ENCODE measurements at regions of chr17 and their contacts with region 1.

Region 1: DNA sequence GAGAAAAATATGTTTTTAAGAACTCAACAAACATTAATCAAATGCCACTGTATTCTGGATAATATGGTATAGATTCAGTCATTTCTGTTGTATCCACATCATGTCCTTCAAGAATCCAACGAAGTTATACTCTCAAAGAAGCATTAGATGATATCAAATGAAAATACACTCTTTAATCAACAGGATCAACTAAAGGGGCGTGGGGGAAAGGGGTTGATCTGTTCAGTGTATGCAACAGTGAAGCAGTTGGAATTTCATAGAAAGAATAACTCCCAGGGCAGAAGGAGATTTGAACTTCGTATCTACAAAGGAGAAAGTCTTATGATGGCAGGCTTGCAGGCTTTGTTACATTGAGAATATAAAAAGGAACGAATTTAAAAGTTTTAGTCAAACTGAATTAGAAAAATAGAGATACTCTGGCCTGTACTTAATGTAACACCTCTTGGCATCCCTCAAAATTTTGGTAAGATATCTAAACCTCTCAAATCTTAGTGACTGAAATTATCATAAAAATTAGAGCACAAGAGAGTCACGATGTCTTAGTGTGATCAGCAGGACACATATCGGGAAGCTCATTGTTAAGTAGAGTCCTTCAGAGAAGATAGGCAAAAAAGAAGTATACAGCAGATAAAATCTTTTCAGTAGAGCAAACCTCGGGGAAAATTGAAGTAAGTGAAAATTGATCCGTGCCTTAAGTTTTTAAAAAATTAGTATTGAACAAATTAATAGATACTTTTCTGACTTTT is 431.4 kb downstream of the KCNJ18 start:
- DNase-seq: no peak
- ATAC-seq: peak in 1 of 3 donors; percentile 14
- H3K4me3 ChIP-seq: no peak overlapping the region
- H3K4me3 Mint-ChIP-seq: no peak overlapping the region
- H3K27ac ChIP-seq: no peak overlapping the region
- H3K27ac Mint-ChIP-seq: no peak overlapping the region
- H3K4me1 ChIP-seq: no peaks in the 10 kb centered on the region
- H3K4me1 Mint-ChIP-seq: no peaks in the 10 kb centered on the region
- H3K27me3 ChIP-seq: no peaks in the 10 kb centered on the region
- H3K27me3 Mint-ChIP-seq: no peaks in the 10 kb centered on the region
- CTCF ChIP-seq: no peak

Region 2: GRCh38 chr17:22090263-22090935 is 33.3 kb before region 1 on chr17:
- intact Hi-C with region 1: loop called (anchors 2 kb)
- DNase-seq: no peak
- ATAC-seq: no peak
- H3K4me3 ChIP-seq: no peak overlapping the region
- H3K4me3 Mint-ChIP-seq: no peak overlapping the region
- H3K27ac ChIP-seq: no peak overlapping the region
- H3K27ac Mint-ChIP-seq: no peak overlapping the region
- H3K4me1 ChIP-seq: no peaks in the 10 kb centered on the region
- H3K4me1 Mint-ChIP-seq: peaks cover 0 to 5% of the 10 kb centered on the region in 2 donors
- H3K27me3 ChIP-seq: no peaks in the 10 kb centered on the region
- H3K27me3 Mint-ChIP-seq: no peaks in the 10 kb centered on the region
- CTCF ChIP-seq: no peak

Region 3: DNA sequence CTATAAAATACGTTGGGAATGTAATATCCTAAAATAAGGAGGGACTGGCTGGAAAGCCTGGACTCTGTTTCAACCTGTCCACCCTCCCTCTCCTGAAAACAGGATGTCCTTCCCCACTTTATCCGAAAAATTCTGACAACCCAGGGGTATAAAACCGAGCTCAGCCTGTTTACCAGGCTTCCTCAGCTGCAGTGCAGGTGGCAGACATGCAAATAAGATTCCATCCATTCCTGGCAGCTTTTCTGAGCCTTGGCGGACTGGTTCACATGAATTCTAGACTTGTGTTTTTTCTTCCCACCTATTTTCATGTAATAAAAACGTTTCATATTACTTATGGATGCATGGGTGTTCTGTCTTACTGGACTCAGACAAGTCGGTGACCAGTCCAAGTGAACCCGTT is 47.9 kb after region 1 on chr17:
- intact Hi-C with region 1: no loop called
- DNase-seq: no peak
- ATAC-seq: no peak
- H3K4me3 ChIP-seq: no peak overlapping the region
- H3K4me3 Mint-ChIP-seq: no peak overlapping the region
- H3K27ac ChIP-seq: no peak overlapping the region
- H3K27ac Mint-ChIP-seq: no peak overlapping the region
- H3K4me1 ChIP-seq: no peaks in the 10 kb centered on the region
- H3K4me1 Mint-ChIP-seq: no peaks in the 10 kb centered on the region
- H3K27me3 ChIP-seq: no peaks in the 10 kb centered on the region
- H3K27me3 Mint-ChIP-seq: no peaks in the 10 kb centered on the region
- CTCF ChIP-seq: no peak

Region 4: GRCh38 chr17:22310717-22311686 is 187.3 kb after region 1 on chr17:
- intact Hi-C with region 1: no loop called
- DNase-seq: no peak
- ATAC-seq: no peak
- H3K4me3 ChIP-seq: no peak overlapping the region
- H3K4me3 Mint-ChIP-seq: no peak overlapping the region
- H3K27ac ChIP-seq: no peak overlapping the region
- H3K27ac Mint-ChIP-seq: no peak overlapping the region
- H3K4me1 ChIP-seq: no peaks in the 10 kb centered on the region
- H3K4me1 Mint-ChIP-seq: no peaks in the 10 kb centered on the region
- H3K27me3 ChIP-seq: no peaks in the 10 kb centered on the region
- H3K27me3 Mint-ChIP-seq: no peaks in the 10 kb centered on the region
- CTCF ChIP-seq: no peak

Region 5: DNA sequence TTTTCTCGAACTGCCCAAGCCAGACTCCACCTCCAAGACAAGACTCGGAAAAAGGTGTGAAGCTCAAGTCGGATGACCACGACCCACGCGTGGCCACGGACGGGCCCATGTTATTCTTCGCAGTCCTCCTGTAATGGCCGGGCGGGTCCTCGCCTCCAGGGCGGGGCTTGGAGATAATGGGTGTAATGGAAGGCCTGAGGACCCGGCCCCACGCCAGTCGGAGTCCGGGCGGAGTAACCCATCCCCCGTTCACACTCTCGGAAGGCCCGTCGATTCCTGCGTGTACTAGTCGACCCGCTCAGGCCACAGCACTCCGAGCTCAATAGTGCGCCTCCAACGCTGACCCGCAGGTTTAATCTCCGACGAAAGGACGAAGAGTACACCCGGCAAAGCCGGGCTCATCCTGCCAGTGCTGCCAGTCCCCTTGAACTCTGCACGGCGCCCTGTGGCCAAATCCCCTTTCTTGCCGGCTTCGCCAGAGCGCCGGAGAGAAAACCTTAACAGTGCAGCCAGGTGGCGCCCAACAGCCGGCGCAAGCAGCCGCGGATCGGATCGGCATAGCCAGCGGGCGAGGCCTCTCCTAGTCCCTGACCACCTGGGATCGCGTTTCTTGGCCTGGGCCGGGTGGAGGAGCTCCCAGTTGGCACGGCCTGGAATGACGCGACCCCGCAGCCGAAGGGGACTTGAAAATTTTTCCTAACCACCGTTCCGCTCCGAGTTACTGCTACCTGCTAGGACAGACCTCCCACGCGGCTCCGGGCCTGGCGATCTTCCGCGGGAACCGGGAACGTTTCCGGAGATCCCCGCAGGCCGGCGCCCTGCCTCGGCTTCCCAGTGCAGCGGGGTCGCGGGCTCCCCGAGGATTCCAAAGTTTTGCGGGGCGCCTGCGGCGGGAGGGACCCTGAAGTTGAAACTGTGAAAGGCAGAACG is 330.6 kb after region 1 on chr17:
- intact Hi-C with region 1: no loop called
- DNase-seq: no peak
- ATAC-seq: no peak
- H3K4me3 ChIP-seq: no peak overlapping the region
- H3K4me3 Mint-ChIP-seq: no peak overlapping the region
- H3K27ac ChIP-seq: no peak overlapping the region
- H3K27ac Mint-ChIP-seq: no peak overlapping the region
- H3K4me1 ChIP-seq: no peaks in the 10 kb centered on the region
- H3K4me1 Mint-ChIP-seq: no peaks in the 10 kb centered on the region
- H3K27me3 ChIP-seq: no peaks in the 10 kb centered on the region
- H3K27me3 Mint-ChIP-seq: no peaks in the 10 kb centered on the region
- CTCF ChIP-seq: no peak

Measured in natural killer cell (primary cell).